ENCODE measurements at regions of chr15 and their contacts with region 1.

Region 1: GRCh38 chr15:88638626-88639372 is at the start of gene ISG20:
- DNase-seq: peak; percentile 98
- ATAC-seq: peak; percentile 83
- H3K4me3 Mint-ChIP-seq: peak within 1 kb of the TSS; percentile 87
- H3K27ac Mint-ChIP-seq: peak within 1 kb of the TSS; percentile 98
- H3K4me1 Mint-ChIP-seq: peaks cover 87% of the 10 kb centered on the region
- H3K27me3 Mint-ChIP-seq: no peaks in the 10 kb centered on the region
- total RNA-seq, gene ISG20: 107 to 120 TPM

Region 2: GRCh38 chr15:87557881-87558280 is 1080.9 kb before region 1 on chr15:
- CTCF ChIA-PET with region 1: no interaction called
- POLR2A ChIA-PET with region 1: no interaction called
- intact Hi-C with region 1: no loop called
- DNase-seq: no peak
- ATAC-seq: no peak
- H3K4me3 Mint-ChIP-seq: no peak overlapping the region
- H3K27ac Mint-ChIP-seq: no peak overlapping the region
- H3K4me1 Mint-ChIP-seq: no peaks in the 10 kb centered on the region
- H3K27me3 Mint-ChIP-seq: no peaks in the 10 kb centered on the region

Region 3: DNA sequence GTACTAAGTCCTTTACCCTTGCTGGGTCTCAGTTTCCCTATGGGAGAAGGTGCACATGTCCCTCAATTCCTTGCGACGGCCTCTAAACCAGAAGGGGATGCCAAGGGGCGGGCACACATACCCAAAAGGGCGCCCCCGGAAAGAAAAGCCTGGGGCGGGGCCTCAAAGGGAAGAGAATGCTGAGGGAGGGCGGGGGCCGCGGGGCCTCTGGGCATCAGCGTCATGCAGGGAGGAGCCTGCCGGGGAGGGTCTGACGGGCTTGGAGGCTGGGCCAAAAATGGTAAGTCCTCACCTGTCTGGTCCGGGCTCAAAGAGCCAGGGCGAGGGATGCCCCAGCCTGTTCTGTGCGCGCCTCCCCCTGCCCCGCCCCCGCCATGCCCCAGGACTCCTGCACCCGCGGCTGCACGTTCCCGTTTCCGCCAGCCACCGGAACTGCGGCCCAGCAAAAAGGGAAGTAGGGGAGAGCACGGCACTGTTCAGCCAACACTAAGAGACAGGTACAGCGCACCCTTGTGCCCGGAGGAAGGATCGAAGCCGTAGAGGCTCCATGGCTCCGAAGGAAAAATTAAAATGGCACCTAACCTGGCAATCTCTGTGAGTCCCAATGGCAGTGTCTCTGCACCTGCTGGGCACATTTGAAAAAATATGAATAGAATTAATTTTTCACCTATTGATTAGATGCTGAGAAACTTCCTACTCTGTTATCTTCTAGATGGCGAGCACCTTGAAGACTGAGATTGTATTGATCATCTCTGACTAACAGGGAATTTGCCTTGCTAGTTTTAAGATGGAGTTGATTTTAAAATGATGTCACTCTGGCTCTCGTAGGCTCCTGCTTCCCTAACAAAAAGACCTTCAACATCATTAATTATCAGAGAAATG is 92.3 kb before region 1 on chr15 and contains the start of gene DET1:
- CTCF ChIA-PET with region 1: no interaction called
- POLR2A ChIA-PET with region 1: no interaction called
- intact Hi-C with region 1: loop called in 1 of 2 experiments (anchors 1 kb)
- DNase-seq: peak; percentile 98
- ATAC-seq: peak; percentile 97
- H3K4me3 Mint-ChIP-seq: peak within 1 kb of the TSS; percentile 83
- H3K27ac Mint-ChIP-seq: peak within 1 kb of the TSS; percentile 91
- H3K4me1 Mint-ChIP-seq: peaks cover 13% of the 10 kb centered on the region
- H3K27me3 Mint-ChIP-seq: no peaks in the 10 kb centered on the region
- total RNA-seq, gene DET1: 2.7 to 3.0 TPM

Region 4: GRCh38 chr15:88627463-88627862 is 11.3 kb before region 1 on chr15:
- CTCF ChIA-PET with region 1: interaction called, 25 read pairs
- POLR2A ChIA-PET with region 1: interaction called, 21 read pairs
- intact Hi-C with region 1: loop called (anchors 1 kb)
- DNase-seq: peak; percentile 80
- ATAC-seq: peak; percentile 51
- H3K4me3 Mint-ChIP-seq: peak overlapping the region; percentile 30
- H3K27ac Mint-ChIP-seq: peak overlapping the region; percentile 86
- H3K4me1 Mint-ChIP-seq: peaks cover 93% of the 10 kb centered on the region
- H3K27me3 Mint-ChIP-seq: no peaks in the 10 kb centered on the region

Region 5: DNA sequence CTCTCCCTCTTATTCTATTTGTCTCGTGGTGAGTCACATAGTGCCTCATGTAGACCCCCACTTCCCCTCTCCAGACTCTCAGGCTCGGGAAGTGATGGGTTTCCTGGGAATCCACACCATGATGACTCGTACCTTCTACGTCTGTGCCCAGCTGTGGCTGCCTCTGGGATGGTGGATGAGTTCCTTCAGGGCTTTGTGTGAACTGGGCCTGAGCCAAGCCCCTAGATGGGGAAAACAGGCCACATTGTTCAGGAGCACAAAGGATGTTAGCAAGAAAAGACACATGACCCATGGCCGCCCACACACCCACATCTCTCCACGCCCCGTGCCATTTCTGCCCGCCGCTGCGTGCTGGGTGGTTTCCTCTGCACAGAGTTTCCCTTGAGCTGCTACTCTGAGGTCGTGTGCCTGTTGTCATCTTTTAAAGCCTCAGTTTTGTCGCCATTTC is 10.5 kb after region 1 on chr15:
- CTCF ChIA-PET with region 1: interaction called, 7 read pairs
- POLR2A ChIA-PET with region 1: interaction called, 9 read pairs
- intact Hi-C with region 1: loop called in 1 of 2 experiments (anchors 2 kb)
- DNase-seq: peak; percentile 92
- ATAC-seq: peak; percentile 87
- H3K4me3 Mint-ChIP-seq: peak overlapping the region; percentile 58
- H3K27ac Mint-ChIP-seq: peak overlapping the region; percentile 98
- H3K4me1 Mint-ChIP-seq: peaks cover 74% of the 10 kb centered on the region
- H3K27me3 Mint-ChIP-seq: no peaks in the 10 kb centered on the region

Region 6: DNA sequence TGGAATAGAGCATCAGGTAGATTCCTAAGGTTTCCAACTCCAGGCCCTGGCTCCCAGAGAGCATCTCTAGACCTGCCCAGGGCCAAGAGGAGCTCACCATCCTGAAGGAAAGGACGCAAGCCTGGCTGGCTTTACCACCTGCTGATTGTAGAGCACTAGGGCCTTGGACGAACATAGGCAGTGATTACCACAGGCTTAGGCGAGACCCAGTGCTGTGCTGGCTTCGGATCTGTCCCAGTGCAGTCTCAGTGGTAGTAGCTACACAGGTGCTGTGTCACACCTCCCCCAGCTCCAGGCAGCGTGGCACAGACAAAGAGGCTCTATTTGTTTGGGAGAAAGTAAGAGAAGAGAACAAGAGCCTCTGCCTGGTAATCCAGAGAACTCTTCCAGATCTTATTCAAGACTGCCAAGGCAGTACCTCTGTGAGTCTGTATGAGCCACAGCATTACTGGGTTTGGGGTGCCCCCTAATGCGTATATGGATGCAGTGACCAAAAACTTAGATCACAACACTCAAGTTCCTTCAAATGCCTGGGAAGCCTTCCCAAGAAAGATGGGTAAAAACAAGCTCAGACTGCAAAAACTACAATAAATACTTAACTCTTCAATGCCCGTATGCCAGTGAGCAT is 25.5 kb after region 1 on chr15:
- CTCF ChIA-PET with region 1: interaction called, 11 read pairs
- POLR2A ChIA-PET with region 1: no interaction called
- intact Hi-C with region 1: loop called in 1 of 2 experiments (anchors 1 kb)
- DNase-seq: peak; percentile 68
- ATAC-seq: peak; percentile 90
- H3K4me3 Mint-ChIP-seq: no peak overlapping the region
- H3K27ac Mint-ChIP-seq: no peak overlapping the region
- H3K4me1 Mint-ChIP-seq: peaks cover 32% of the 10 kb centered on the region
- H3K27me3 Mint-ChIP-seq: peaks cover 5% of the 10 kb centered on the region